ENCODE measurements at regions of chr6 and their contacts with region 1.

Region 1: DNA sequence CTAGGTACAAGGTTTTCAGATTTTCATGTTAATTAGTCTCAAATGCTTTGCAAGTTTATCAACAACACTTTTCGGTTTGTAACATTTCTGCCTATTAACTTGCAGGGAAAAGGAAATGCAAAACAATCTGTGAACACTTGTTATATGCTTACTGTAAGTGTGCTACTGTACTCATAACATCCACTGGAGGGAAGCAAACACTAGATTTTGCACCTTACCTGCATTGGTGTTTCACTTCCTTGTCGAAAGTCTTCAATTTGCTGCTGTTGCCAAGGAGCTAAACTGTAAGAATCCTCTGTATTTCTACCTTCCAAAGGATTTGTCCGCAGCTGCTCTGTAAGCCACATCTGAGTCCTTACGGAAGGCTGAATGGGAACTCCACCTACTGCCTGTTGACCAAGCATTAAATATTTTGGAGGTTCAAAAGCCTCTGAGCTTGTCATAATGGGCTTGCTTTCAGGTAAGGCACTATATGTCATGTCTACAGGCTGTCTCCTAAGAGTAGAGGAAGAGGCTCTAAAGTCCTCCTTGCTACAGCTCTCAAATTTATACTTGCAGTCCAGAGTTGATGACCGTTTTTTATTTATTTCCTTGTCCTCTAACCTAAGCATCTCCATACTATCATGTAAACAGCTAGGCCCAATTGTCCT is 17.3 kb downstream of the PLN start:
- DNase-seq: peak; percentile 28
- H3K4me3 Mint-ChIP-seq: no peak overlapping the region
- H3K27ac Mint-ChIP-seq: no peak overlapping the region
- H3K4me1 Mint-ChIP-seq: no peaks in the 10 kb centered on the region
- H3K27me3 Mint-ChIP-seq: no peaks in the 10 kb centered on the region
- CTCF ChIP-seq: peak; percentile 27

Region 2: GRCh38 chr6:118618679-118619377 is 53.4 kb after region 1 on chr6:
- CTCF ChIA-PET with region 1: interaction called, 3 read pairs
- intact Hi-C with region 1: loop called (anchors 1 kb)
- DNase-seq: peak; percentile 72
- H3K4me3 Mint-ChIP-seq: no peak overlapping the region
- H3K27ac Mint-ChIP-seq: no peak overlapping the region
- H3K4me1 Mint-ChIP-seq: no peaks in the 10 kb centered on the region
- H3K27me3 Mint-ChIP-seq: no peaks in the 10 kb centered on the region
- CTCF ChIP-seq: peak; percentile 59

Region 3: DNA sequence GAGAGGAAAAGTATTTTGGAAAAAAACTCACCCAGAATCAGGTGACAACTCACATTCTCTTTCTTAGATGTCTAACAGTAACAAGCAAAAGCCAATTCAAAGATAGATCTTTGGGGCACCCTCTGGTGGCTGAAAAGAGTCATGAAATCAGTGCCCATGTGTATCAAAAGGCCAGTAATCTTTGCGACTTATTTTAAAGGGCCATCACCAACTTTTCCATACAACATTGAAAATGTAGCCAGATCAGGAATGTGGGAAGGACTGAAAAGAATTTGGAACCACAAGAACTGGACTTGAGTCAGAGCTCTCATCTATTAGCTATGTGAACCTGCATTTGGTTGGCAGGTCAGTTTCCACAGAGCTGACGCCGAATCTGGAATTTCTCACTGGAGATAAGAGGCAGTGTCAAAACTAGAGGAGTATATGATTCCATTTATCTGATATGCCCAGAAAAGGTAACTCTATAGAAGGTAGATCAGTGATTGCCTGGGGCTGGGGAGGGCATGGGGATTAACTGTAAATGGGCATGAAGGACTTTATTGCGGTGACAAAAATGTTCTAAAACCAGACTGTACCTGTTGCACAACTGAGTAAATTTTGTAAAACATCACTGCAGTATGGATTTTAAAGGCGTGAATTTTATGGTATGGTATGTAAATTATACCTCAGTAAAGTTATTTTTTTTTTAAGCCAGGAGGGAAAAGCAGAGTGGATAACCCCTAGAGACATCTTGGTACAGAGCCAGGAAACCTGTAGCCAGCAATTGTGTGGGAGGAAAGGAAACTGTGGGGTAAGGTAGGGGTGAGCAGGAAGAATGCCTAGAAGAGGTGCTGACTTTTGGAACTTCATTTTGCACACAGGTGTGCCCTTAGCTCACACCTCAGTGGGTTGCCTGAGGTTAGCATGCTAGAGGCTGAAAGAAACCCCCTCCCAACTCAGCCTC is 211.4 kb after region 1 on chr6:
- CTCF ChIA-PET with region 1: interaction called, 3 read pairs
- intact Hi-C with region 1: loop called (anchors 1 kb)
- DNase-seq: peak; percentile 64
- H3K4me3 Mint-ChIP-seq: no peak overlapping the region
- H3K27ac Mint-ChIP-seq: no peak overlapping the region
- H3K4me1 Mint-ChIP-seq: peaks cover 13% of the 10 kb centered on the region
- H3K27me3 Mint-ChIP-seq: no peaks in the 10 kb centered on the region
- CTCF ChIP-seq: peak; percentile 26

Region 4: DNA sequence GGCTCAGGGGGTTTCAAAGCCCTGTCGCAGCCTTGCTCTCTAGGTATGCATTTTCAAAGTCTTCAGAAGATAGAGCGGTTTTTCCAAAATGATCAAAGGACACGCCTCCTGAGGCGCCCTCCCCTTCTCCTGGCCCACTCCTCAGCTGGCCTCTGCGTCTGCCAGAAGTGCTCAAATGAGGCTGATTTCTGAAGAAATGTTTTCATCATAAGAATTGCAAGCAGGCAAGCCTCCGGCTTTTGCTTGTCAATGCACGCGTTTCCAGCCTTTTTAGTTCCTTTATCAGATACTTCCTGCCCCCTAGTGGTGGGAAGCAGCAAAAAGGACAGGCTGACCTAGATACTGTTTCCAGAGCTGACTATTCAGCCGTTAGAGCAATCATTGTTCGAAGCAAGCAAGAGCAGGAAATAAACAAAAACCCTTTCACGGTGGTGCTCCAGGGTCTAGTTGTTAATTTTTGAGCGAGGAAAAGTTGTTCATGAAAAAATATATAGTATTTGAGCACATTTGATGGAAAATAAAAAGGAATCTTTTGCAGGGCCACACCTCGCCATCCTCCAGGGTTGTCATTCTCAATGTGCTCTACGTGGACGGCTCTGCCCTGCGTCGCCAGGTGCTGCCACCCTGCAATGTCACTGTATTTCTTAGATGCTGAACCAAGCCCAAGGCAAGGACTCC is 235.1 kb after region 1 on chr6:
- CTCF ChIA-PET with region 1: interaction called, 10 read pairs
- intact Hi-C with region 1: loop called (anchors 2 kb)
- DNase-seq: peak; percentile 81
- H3K4me3 Mint-ChIP-seq: peak overlapping the region; percentile 41
- H3K27ac Mint-ChIP-seq: peak overlapping the region; percentile 54
- H3K4me1 Mint-ChIP-seq: peaks cover 17% of the 10 kb centered on the region
- H3K27me3 Mint-ChIP-seq: no peaks in the 10 kb centered on the region
- CTCF ChIP-seq: peak; percentile 75

Region 5: GRCh38 chr6:118893807-118894424 is 328.5 kb after region 1 on chr6 and contains the start of gene ASF1A:
- CTCF ChIA-PET with region 1: no interaction called
- intact Hi-C with region 1: loop called (anchors 10 kb)
- DNase-seq: peak; percentile 96
- H3K4me3 Mint-ChIP-seq: peak within 1 kb of the TSS; percentile 99
- H3K27ac Mint-ChIP-seq: peak within 1 kb of the TSS; percentile 100
- H3K4me1 Mint-ChIP-seq: peaks cover 17% of the 10 kb centered on the region
- H3K27me3 Mint-ChIP-seq: no peaks in the 10 kb centered on the region
- CTCF ChIP-seq: peak; percentile 46
- total RNA-seq, gene ASF1A: 17.2 and 19.7 TPM in 2 replicates